Left lung (tissue), 14 donors: ENCODE measurements at regions of chr16 and their contacts with region 1.

Region 1: GRCh38 chr16:75794426-75794825 is 68.1 kb upstream of the CPHXL start:
- DNase-seq: no peak
- ATAC-seq: no peak
- H3K4me3 ChIP-seq: no peak overlapping the region
- H3K27ac ChIP-seq: no peak overlapping the region
- H3K4me1 ChIP-seq: no peaks in the 10 kb centered on the region
- H3K27me3 ChIP-seq: no peaks in the 10 kb centered on the region
- CTCF ChIP-seq: no peak

Region 2: GRCh38 chr16:75733305-75734211 is 60.9 kb before region 1 on chr16:
- intact Hi-C with region 1: no loop called
- DNase-seq: peak in 2 of 4 donors; percentile 34 to 52
- ATAC-seq: peak; percentile 71
- H3K4me3 ChIP-seq: no peak overlapping the region
- H3K27ac ChIP-seq: peak overlapping the region; percentile 41 to 47
- H3K4me1 ChIP-seq: peaks cover 0 to 5% of the 10 kb centered on the region in 2 donors
- H3K27me3 ChIP-seq: no peaks in the 10 kb centered on the region
- CTCF ChIP-seq: no peak

Region 3: DNA sequence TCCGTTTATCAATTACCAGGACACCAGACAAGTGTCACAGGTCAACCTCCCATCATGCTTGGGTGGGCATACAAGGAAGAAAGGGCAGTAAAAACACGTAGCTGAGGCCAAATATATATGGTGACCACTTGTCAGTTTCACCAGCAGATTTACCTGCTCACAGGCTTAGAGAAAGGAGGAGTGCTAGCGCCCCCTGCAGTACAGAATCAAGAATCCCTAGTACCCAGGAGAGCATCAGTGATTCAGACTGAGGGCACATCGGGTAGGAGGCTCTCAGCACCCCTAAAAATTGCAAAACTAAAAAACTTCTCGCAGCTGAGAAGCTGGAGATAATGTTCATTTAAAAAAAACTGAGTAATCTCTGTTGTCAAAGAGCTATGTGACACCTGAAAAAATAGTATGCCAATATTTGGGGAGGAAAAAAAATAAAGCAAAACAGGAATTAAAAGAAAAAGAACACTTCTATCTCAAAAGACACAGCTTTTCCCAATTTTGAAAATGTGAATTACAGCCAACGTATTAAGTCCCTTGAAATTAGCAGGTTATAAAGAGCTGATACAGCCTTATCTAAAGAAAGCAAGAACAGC is 1375.3 kb after region 1 on chr16:
- intact Hi-C with region 1: loop called in 1 of 2 experiments (anchors 10 kb)
- DNase-seq: peak in 1 of 4 donors; percentile 47
- ATAC-seq: peak; percentile 75
- H3K4me3 ChIP-seq: no peak overlapping the region
- H3K27ac ChIP-seq: no peak overlapping the region
- H3K4me1 ChIP-seq: no peaks in the 10 kb centered on the region
- H3K27me3 ChIP-seq: peaks cover 0 to 5% of the 10 kb centered on the region in 2 donors
- CTCF ChIP-seq: peak; percentile 59 to 63